ENCODE measurements at regions of chr18 and their contacts with region 1.

Region 1: DNA sequence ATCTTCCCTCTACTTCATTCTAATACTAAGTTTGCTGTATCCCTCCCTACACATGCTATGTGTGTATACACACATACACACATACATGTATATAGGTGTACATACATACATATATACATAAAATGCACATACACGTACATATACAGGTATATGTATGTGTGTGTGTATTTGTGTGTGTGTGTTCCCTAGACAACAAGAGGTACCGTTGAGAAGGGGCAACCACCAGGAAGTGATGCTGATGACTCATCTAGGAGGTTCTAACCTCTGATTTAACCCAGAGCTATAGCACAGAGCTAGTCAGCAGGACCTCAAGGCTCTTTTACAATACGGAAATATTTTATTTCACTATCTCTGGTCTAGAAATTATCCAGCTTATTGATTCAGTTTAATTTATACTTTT is 139.2 kb downstream of the LAMA3 start:
- DNase-seq: no peak
- ATAC-seq: no peak
- H3K4me3 ChIP-seq: no peak overlapping the region
- H3K27ac ChIP-seq: no peak overlapping the region
- H3K4me1 ChIP-seq: peaks cover 22 to 28% of the 10 kb centered on the region in 2 donors
- H3K27me3 ChIP-seq: no peaks in the 10 kb centered on the region
- CTCF ChIP-seq: no peak
- POLR2A ChIP-seq: no peak

Region 2: DNA sequence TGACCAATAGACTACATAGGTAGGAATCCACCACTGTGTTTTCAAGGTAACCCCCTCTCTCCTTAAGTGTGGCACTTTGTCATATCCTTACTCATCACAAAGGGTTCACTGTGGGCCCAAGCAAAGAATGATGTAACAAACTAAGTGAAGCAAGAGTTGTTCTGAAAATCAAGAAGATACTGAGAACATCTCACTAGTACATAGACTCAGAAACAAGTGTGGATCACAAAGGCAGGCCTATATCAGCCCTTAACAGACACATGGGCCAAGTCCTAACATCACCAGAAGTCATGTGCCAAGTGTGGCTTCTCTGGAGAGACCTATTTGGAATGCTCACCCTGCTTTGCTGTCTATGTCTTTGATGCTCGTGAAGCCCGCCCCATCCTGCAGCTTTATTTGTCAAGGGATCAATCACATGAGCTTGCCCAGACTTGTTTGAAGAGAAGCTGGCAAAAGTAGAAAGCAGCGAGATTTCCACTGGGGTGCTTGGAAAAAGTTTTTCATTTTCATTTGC is 54.9 kb after region 1 on chr18:
- in situ Hi-C with region 1: loop called in 1 of 4 experiments (anchors 10 kb)
- intact Hi-C with region 1: loop called (anchors 10 kb)
- DNase-seq: peak; percentile 35 to 67
- ATAC-seq: peak; percentile 75 to 81
- H3K4me3 ChIP-seq: no peak overlapping the region
- H3K27ac ChIP-seq: peak overlapping the region; percentile 26 to 50 (median 42)
- H3K4me1 ChIP-seq: no peaks in the 10 kb centered on the region
- H3K27me3 ChIP-seq: no peaks in the 10 kb centered on the region
- CTCF ChIP-seq: no peak
- POLR2A ChIP-seq: peak in 1 of 2 donors; percentile 11

Region 3: DNA sequence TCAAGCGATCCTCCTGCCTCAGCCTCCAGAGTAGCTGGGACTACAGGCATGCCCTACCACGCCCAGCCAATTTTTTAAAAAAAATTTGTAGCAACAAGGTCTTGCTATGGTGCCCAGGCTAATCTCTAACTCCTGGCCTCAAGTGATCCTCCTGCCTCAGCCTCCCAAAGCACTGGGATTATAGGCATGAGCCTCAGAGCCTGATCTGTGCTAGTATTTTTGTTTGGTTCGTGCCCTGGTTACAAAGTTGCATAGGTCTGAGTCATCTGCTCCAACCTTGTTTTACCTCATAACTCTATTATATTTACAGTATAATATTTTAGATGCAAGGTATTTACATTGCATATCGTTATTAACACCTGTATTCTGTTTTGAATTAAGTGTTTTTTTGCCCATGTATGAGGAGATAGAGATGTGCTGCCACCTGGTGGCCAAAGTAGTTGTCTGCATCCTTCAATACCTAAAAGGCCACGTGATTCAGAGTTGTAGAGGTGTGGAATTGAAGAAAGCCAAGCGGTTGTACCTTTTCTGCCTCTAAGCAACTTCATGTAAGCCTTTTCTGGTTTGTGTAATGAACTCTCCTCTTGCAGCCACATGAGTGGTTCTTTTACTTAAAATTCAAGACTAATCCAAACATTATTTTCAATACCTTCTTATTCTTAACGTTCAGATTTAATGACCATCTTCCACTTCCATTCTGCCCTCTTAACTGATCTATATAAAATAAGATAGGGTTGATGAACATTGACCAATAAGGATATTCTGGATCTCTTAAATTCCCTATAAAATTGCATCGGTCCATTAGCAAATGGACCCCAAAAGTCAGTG is 290.5 kb after region 1 on chr18:
- in situ Hi-C with region 1: no loop called
- intact Hi-C with region 1: loop called (anchors 2 kb)
- DNase-seq: peak; percentile 17 to 48
- ATAC-seq: peak; percentile 70 to 84
- H3K4me3 ChIP-seq: no peak overlapping the region
- H3K27ac ChIP-seq: no peak overlapping the region
- H3K4me1 ChIP-seq: no peaks in the 10 kb centered on the region
- H3K27me3 ChIP-seq: no peaks in the 10 kb centered on the region
- CTCF ChIP-seq: peak; percentile 75 to 89 (median 86)
- POLR2A ChIP-seq: no peak